Heart left ventricle (tissue), 16 donors: ENCODE measurements at regions of chr11 and their contacts with region 1.

Region 1: GRCh38 chr11:30586251-30587144 is at the start of gene MPPED2:
- DNase-seq: peak; percentile 53 to 75 (median 61)
- ATAC-seq: peak; percentile 40 to 91 (median 82)
- H3K4me3 ChIP-seq: peak within 1 kb of the TSS; percentile 64 to 97 (median 88)
- H3K27ac ChIP-seq: peak within 1 kb of the TSS; percentile 83 to 95 (median 88)
- H3K4me1 ChIP-seq: peaks cover 0 to 22% (median 4%) of the 10 kb centered on the region in 12 donors
- H3K27me3 ChIP-seq: peaks cover 0 to 34% (median 0%) of the 10 kb centered on the region in 9 donors
- CTCF ChIP-seq: peak; percentile 25 to 67 (median 52)
- POLR2A ChIP-seq: no peak
- total RNA-seq, gene MPPED2: 4.6 to 14.3 (median 9.7) TPM

Region 2: GRCh38 chr11:30346068-30346688 is 240.3 kb before region 1 on chr11:
- intact Hi-C with region 1: loop called in 9 of 10 experiments (anchors 5 to 10 kb)
- DNase-seq: no peak
- ATAC-seq: peak in 1 of 4 donors; percentile 36
- H3K4me3 ChIP-seq: no peak overlapping the region
- H3K27ac ChIP-seq: no peak overlapping the region
- H3K4me1 ChIP-seq: peaks cover 0 to 4% (median 0%) of the 10 kb centered on the region in 12 donors
- H3K27me3 ChIP-seq: no peaks in the 10 kb centered on the region
- CTCF ChIP-seq: peak; percentile 44 to 80 (median 70)
- POLR2A ChIP-seq: no peak

Region 3: GRCh38 chr11:30422447-30423274 is 163.8 kb before region 1 on chr11:
- intact Hi-C with region 1: loop called in 1 of 10 experiments (anchors 10 kb)
- DNase-seq: no peak
- ATAC-seq: no peak
- H3K4me3 ChIP-seq: no peak overlapping the region
- H3K27ac ChIP-seq: peak overlapping the region in 1 of 12 donors; percentile 3
- H3K4me1 ChIP-seq: peaks cover 0 to 21% (median 0%) of the 10 kb centered on the region in 12 donors
- H3K27me3 ChIP-seq: no peaks in the 10 kb centered on the region
- CTCF ChIP-seq: no peak
- POLR2A ChIP-seq: no peak

Region 4: DNA sequence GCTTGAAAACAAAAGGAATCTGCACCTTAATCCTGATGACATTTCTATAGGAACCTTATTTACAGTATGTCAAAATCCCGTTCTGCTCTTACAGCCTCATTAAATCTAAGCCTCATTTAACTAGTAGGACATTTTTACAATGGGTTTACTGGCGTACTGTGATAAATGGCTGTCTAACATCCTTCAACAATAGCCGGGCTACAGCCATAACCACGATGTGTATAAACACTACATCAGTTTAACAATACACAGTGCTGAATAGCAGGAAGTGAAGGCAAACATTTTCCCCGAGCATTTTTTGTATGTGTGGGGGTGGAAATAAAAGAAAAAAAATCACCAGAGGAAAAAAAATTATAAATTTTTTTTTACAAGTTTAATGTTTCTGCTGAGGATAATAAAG is 132.4 kb before region 1 on chr11:
- intact Hi-C with region 1: loop called in 1 of 10 experiments (anchors 10 kb)
- DNase-seq: no peak
- ATAC-seq: peak in 2 of 4 donors; percentile 52 to 75
- H3K4me3 ChIP-seq: no peak overlapping the region
- H3K27ac ChIP-seq: peak overlapping the region in 8 of 12 donors; percentile 2 to 47 (median 38)
- H3K4me1 ChIP-seq: peaks cover 4 to 61% (median 40%) of the 10 kb centered on the region in 12 donors
- H3K27me3 ChIP-seq: no peaks in the 10 kb centered on the region
- CTCF ChIP-seq: no peak
- POLR2A ChIP-seq: no peak

Region 5: DNA sequence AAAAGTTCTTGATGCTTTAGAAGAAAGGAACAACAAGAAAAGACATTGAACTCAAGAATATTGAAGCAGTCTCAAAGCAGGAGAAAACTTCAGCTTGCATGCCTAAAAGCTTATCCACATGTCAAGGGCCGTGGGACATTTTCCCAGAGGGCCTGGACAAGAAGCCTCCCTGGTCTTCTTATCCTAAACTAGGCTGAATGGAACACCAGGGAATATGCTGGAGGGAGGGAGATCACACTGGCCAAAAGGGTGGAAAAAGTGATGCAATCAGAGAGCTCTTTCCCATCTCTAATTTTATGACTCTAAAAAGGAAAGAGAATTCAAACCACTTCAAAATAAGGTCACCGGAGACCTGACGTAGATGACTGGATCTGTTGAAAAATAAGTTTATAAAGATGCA is 107.6 kb before region 1 on chr11:
- intact Hi-C with region 1: loop called in 5 of 10 experiments (anchors 5 to 10 kb)
- DNase-seq: peak; percentile 62 to 85 (median 77)
- ATAC-seq: peak; percentile 92 to 95 (median 94)
- H3K4me3 ChIP-seq: peak overlapping the region in 1 of 12 donors; percentile 0
- H3K27ac ChIP-seq: peak overlapping the region; percentile 43 to 82 (median 64)
- H3K4me1 ChIP-seq: peaks cover 8 to 73% (median 33%) of the 10 kb centered on the region in 12 donors
- H3K27me3 ChIP-seq: no peaks in the 10 kb centered on the region
- CTCF ChIP-seq: no peak
- POLR2A ChIP-seq: peak in 1 of 2 donors; percentile 19

Region 6: DNA sequence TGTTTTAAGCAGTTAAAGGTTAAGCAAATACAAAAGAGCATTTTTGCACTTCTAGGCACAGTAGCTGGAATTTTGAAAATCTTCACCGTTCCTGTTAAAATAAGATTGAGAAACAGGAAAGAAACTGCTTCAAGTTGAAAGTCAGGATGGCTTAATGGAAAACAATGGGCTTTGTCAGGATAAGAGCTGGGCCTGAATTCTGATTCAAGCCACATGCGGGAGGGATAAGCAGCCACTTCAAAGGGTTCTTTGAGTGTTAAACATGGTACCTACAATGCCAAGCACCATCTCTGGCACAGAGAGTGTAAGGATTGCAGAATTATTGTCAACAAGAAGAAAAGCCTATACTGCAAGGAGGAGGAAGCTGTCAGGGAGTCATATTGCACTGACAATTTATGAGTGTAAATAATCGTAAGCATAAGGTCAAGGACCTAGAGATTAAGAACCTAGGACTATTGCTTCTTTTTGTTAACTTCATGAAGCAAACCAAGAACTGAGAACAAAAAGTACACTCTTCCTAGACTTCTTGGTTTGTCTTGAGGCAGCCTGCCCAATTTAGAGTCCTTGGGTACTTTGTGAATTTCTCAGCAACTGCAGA is 32.9 kb before region 1 on chr11:
- intact Hi-C with region 1: no loop called
- DNase-seq: no peak
- ATAC-seq: no peak
- H3K4me3 ChIP-seq: no peak overlapping the region
- H3K27ac ChIP-seq: no peak overlapping the region
- H3K4me1 ChIP-seq: peaks cover 0 to 9% (median 0%) of the 10 kb centered on the region in 12 donors
- H3K27me3 ChIP-seq: no peaks in the 10 kb centered on the region
- CTCF ChIP-seq: no peak
- POLR2A ChIP-seq: no peak

Region 7: DNA sequence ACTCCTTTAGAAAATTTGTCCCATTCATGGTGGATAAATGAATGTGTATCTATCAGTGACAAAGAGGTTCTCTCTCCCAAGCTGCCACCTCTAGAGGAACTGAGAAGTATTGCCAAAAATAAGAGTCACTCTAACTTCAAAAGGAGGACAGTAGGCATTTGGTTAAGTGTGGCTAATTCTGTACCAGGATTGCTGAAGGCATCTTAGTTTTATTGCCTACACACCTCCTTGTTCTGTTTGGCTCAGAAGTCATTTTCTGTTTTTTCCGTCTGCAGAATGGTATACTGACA is 188.7 kb after region 1 on chr11:
- intact Hi-C with region 1: no loop called
- DNase-seq: no peak
- ATAC-seq: no peak
- H3K4me3 ChIP-seq: no peak overlapping the region
- H3K27ac ChIP-seq: no peak overlapping the region
- H3K4me1 ChIP-seq: peaks cover 0 to 3% (median 0%) of the 10 kb centered on the region in 12 donors
- H3K27me3 ChIP-seq: no peaks in the 10 kb centered on the region
- CTCF ChIP-seq: peak in 1 of 12 donors; percentile 5
- POLR2A ChIP-seq: no peak

Region 8: DNA sequence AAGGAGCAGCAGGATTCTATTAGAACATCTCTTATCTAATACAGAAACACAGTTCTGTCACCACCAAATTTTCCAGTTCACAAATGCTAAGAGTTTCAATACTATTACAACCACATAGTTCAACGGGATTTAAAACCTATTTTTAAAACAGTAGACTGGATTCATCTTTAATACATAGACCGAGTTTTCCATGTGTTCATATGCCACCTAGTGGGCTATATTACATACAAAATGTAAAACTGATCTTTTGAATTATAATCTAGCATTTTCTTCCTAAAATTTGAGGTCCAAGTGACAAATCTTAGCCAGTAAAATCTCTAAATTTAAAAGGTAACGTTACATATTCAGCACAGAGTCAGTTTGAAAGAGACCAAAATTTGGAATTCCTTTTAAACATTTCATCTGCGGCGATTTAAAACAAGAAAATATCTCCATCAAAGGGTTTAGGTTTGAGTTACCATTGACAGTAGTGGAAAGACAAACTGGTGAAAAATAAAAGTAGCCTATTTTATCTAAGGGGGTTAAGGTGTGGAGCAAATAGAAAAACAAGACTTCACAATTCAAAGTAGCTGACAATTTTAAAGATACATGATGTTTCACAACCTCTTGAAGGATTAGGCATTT is 269.0 kb after region 1 on chr11:
- intact Hi-C with region 1: loop called in 4 of 10 experiments (anchors 5 to 10 kb)
- DNase-seq: no peak
- ATAC-seq: no peak
- H3K4me3 ChIP-seq: no peak overlapping the region
- H3K27ac ChIP-seq: no peak overlapping the region
- H3K4me1 ChIP-seq: peaks cover 0 to 4% (median 0%) of the 10 kb centered on the region in 12 donors
- H3K27me3 ChIP-seq: no peaks in the 10 kb centered on the region
- CTCF ChIP-seq: peak in 11 of 12 donors; percentile 32 to 73 (median 59)
- POLR2A ChIP-seq: no peak

Region 9: GRCh38 chr11:30917859-30918478 is 331.5 kb after region 1 on chr11:
- intact Hi-C with region 1: loop called in 3 of 10 experiments (anchors 5 to 10 kb)
- DNase-seq: no peak
- ATAC-seq: peak in 2 of 4 donors; percentile 26 to 57
- H3K4me3 ChIP-seq: no peak overlapping the region
- H3K27ac ChIP-seq: no peak overlapping the region
- H3K4me1 ChIP-seq: peaks cover 0 to 9% (median 0%) of the 10 kb centered on the region in 12 donors
- H3K27me3 ChIP-seq: peaks cover 0 to 3% (median 0%) of the 10 kb centered on the region in 9 donors
- CTCF ChIP-seq: peak; percentile 66 to 82 (median 75)
- POLR2A ChIP-seq: no peak